ENCODE measurements at regions of chr6 and their contacts with region 1.

Region 1: GRCh38 chr6:167485186-167485978 is 160.5 kb downstream of the TTLL2 start:
- DNase-seq: peak in 2 of 5 donors; percentile 30 to 53
- H3K4me3 ChIP-seq: no peak overlapping the region
- H3K27ac ChIP-seq: no peak overlapping the region
- H3K4me1 ChIP-seq: peaks cover 2% of the 10 kb centered on the region
- H3K27me3 ChIP-seq: no peaks in the 10 kb centered on the region
- CTCF ChIP-seq: peak in 2 of 3 donors; percentile 51 to 56
- EP300 ChIP-seq: no peak
- POLR2A ChIP-seq: no peak

Region 2: GRCh38 chr6:167826230-167826895 is 341.0 kb after region 1 on chr6:
- intact Hi-C with region 1: loop called in 1 of 4 experiments (anchors 5 kb)
- DNase-seq: peak; percentile 76 to 88 (median 82)
- H3K4me3 ChIP-seq: peak overlapping the region; percentile 78
- H3K27ac ChIP-seq: no peak overlapping the region
- H3K4me1 ChIP-seq: peaks cover 10% of the 10 kb centered on the region
- H3K27me3 ChIP-seq: peaks cover 3% of the 10 kb centered on the region
- CTCF ChIP-seq: peak; percentile 25 to 63 (median 54)
- EP300 ChIP-seq: no peak
- POLR2A ChIP-seq: no peak

Region 3: GRCh38 chr6:167898673-167899311 is 413.4 kb after region 1 on chr6:
- intact Hi-C with region 1: loop called (anchors 2 to 5 kb)
- DNase-seq: no peak
- H3K4me3 ChIP-seq: no peak overlapping the region
- H3K27ac ChIP-seq: no peak overlapping the region
- H3K4me1 ChIP-seq: no peaks in the 10 kb centered on the region
- H3K27me3 ChIP-seq: no peaks in the 10 kb centered on the region
- CTCF ChIP-seq: peak; percentile 43 to 60 (median 54)
- EP300 ChIP-seq: no peak
- POLR2A ChIP-seq: no peak

Region 4: GRCh38 chr6:167904791-167905190 is 419.4 kb after region 1 on chr6:
- intact Hi-C with region 1: loop called (anchors 2 to 5 kb)
- DNase-seq: no peak
- H3K4me3 ChIP-seq: no peak overlapping the region
- H3K27ac ChIP-seq: no peak overlapping the region
- H3K4me1 ChIP-seq: no peaks in the 10 kb centered on the region
- H3K27me3 ChIP-seq: no peaks in the 10 kb centered on the region
- CTCF ChIP-seq: no peak
- EP300 ChIP-seq: no peak
- POLR2A ChIP-seq: no peak

Measured in ovary (tissue), 10 donors.